Activated CD8-positive, alpha-beta T cell treated with anti-CD3 and anti-CD28 coated beads, Interleukin-2, amount 10 ng/mL, durations not matched to agents 7 days and 5 days (primary cell): ENCODE measurements at regions of chr20 and their contacts with region 1.

Region 1: GRCh38 chr20:48620519-48621254 is 207.1 kb downstream of the PREX1 start:
- DNase-seq: peak; percentile 80
- ATAC-seq: peak; percentile 80
- H3K4me3 Mint-ChIP-seq: peak overlapping the region; percentile 32
- H3K27ac Mint-ChIP-seq: peak overlapping the region; percentile 66
- H3K4me1 Mint-ChIP-seq: peaks cover 19% of the 10 kb centered on the region
- H3K27me3 Mint-ChIP-seq: no peaks in the 10 kb centered on the region

Region 2: GRCh38 chr20:47663333-47664067 is 957.2 kb before region 1 on chr20:
- CTCF ChIA-PET with region 1: interaction called, 11 read pairs
- POLR2A ChIA-PET with region 1: no interaction called
- DNase-seq: peak; percentile 85
- ATAC-seq: peak; percentile 85
- H3K4me3 Mint-ChIP-seq: no peak overlapping the region
- H3K27ac Mint-ChIP-seq: no peak overlapping the region
- H3K4me1 Mint-ChIP-seq: peaks cover 8% of the 10 kb centered on the region
- H3K27me3 Mint-ChIP-seq: no peaks in the 10 kb centered on the region

Region 3: GRCh38 chr20:47677635-47678453 is 942.8 kb before region 1 on chr20:
- CTCF ChIA-PET with region 1: interaction called, 29 read pairs
- POLR2A ChIA-PET with region 1: no interaction called
- DNase-seq: peak; percentile 65
- ATAC-seq: peak; percentile 80
- H3K4me3 Mint-ChIP-seq: no peak overlapping the region
- H3K27ac Mint-ChIP-seq: no peak overlapping the region
- H3K4me1 Mint-ChIP-seq: peaks cover 4% of the 10 kb centered on the region
- H3K27me3 Mint-ChIP-seq: no peaks in the 10 kb centered on the region

Region 4: DNA sequence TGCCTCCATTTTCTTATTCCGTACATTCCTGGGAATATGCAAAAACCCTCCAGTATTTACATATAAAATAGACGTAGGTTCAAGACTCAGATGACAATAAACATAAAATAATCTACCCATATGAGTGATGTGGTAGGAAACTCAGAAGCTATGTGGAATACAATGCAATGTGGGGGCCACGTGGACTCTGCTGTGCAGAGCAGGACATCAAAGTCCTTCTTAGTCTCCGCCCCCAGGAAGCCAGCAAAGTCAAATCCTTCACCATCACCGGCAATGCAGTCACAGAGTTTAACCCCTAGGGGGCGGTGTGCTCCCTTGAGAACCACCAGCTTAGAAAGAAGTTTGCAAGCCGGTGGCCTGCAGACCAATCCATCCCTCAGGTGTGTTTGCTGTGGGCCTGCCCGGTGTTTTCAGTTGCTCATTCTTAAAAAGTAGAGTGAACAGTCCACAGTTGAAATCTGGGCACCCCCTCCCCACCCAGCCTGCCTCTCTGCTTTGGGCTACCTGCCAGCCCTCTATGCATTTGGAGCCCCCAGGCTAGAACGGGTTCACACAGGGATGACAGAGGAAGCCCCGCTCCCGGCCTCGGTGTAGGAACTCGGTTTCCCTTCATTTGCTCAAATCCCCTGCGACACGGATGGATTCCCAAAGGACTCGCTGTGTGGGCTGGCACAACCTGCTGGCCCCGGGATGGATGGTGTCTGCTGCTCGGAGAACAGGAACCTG is 895.3 kb before region 1 on chr20:
- CTCF ChIA-PET with region 1: interaction called, 28 read pairs
- POLR2A ChIA-PET with region 1: no interaction called
- DNase-seq: peak; percentile 93
- ATAC-seq: peak; percentile 59
- H3K4me3 Mint-ChIP-seq: no peak overlapping the region
- H3K27ac Mint-ChIP-seq: peak overlapping the region; percentile 73
- H3K4me1 Mint-ChIP-seq: peaks cover 58% of the 10 kb centered on the region
- H3K27me3 Mint-ChIP-seq: no peaks in the 10 kb centered on the region

Region 5: GRCh38 chr20:48545015-48545718 is 75.5 kb before region 1 on chr20:
- CTCF ChIA-PET with region 1: no interaction called
- POLR2A ChIA-PET with region 1: no interaction called
- DNase-seq: no peak
- ATAC-seq: no peak
- H3K4me3 Mint-ChIP-seq: no peak overlapping the region
- H3K27ac Mint-ChIP-seq: no peak overlapping the region
- H3K4me1 Mint-ChIP-seq: no peaks in the 10 kb centered on the region
- H3K27me3 Mint-ChIP-seq: no peaks in the 10 kb centered on the region

Region 6: DNA sequence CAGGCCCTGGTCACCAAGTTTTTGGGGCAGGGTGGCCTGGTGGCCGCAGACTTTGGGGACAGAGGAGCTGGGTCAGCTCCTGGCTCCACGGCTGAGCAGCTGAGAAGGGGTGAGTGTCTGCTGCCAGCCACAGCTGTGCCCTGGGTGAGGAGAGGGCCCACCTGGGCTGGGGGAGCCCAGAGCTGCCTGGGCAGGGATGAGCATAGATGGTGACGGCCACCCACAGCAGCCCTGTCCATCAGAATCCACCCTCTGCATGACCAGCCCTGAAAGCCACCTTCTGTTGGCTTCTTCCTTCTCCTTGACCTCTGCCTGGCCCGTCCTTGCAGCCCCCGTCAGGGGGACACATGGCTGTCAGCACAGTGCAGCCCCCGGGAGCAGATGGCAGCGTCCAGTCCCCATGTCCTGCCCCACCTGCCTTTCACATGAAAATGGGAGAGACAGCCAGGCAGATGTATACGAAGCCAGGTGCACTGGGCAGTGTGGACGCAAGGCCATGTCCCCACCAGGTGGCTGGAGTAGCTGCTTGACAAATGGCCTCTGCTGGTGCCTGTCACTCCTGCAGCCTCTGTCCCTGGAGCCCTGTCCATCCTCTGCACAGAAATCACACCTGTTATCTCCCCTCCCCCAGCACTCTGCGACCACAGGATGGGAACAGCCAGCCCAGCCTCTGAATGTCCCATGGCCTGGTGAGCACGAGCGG is 13.7 kb before region 1 on chr20:
- CTCF ChIA-PET with region 1: interaction called, 14 read pairs
- POLR2A ChIA-PET with region 1: no interaction called
- DNase-seq: no peak
- ATAC-seq: no peak
- H3K4me3 Mint-ChIP-seq: no peak overlapping the region
- H3K27ac Mint-ChIP-seq: no peak overlapping the region
- H3K4me1 Mint-ChIP-seq: no peaks in the 10 kb centered on the region
- H3K27me3 Mint-ChIP-seq: peaks cover 4% of the 10 kb centered on the region

Region 7: GRCh38 chr20:48866502-48867335 is 246.0 kb after region 1 on chr20:
- CTCF ChIA-PET with region 1: no interaction called
- POLR2A ChIA-PET with region 1: no interaction called
- DNase-seq: no peak
- ATAC-seq: no peak
- H3K4me3 Mint-ChIP-seq: no peak overlapping the region
- H3K27ac Mint-ChIP-seq: no peak overlapping the region
- H3K4me1 Mint-ChIP-seq: peaks cover 12% of the 10 kb centered on the region
- H3K27me3 Mint-ChIP-seq: peaks cover 7% of the 10 kb centered on the region